ENCODE measurements at regions of chr1 and their contacts with region 1.

Region 1: GRCh38 chr1:25810341-25811299 is 9.1 kb upstream of the MTFR1L start:
- DNase-seq: peak; percentile 96
- ATAC-seq: peak; percentile 81
- H3K4me3 Mint-ChIP-seq: no peak overlapping the region
- H3K27ac Mint-ChIP-seq: no peak overlapping the region
- H3K4me1 Mint-ChIP-seq: 0 out of 2 replicates have a peak, but pooled peaks cover 3% of the 10 kb centered on the region
- H3K27me3 Mint-ChIP-seq: no peaks in the 10 kb centered on the region
- CTCF ChIP-seq: peak; percentile 90

Region 2: GRCh38 chr1:25503551-25504426 is 306.8 kb before region 1 on chr1:
- CTCF ChIA-PET with region 1: interaction called, 17 read pairs
- POLR2A ChIA-PET with region 1: no interaction called
- DNase-seq: peak; percentile 83
- ATAC-seq: peak; percentile 87
- H3K4me3 Mint-ChIP-seq: no peak overlapping the region
- H3K27ac Mint-ChIP-seq: peak overlapping the region; percentile 81
- H3K4me1 Mint-ChIP-seq: peaks cover 46% of the 10 kb centered on the region
- H3K27me3 Mint-ChIP-seq: no peaks in the 10 kb centered on the region
- CTCF ChIP-seq: peak; percentile 21; the same call in 1 of the 2 replicates

Region 3: DNA sequence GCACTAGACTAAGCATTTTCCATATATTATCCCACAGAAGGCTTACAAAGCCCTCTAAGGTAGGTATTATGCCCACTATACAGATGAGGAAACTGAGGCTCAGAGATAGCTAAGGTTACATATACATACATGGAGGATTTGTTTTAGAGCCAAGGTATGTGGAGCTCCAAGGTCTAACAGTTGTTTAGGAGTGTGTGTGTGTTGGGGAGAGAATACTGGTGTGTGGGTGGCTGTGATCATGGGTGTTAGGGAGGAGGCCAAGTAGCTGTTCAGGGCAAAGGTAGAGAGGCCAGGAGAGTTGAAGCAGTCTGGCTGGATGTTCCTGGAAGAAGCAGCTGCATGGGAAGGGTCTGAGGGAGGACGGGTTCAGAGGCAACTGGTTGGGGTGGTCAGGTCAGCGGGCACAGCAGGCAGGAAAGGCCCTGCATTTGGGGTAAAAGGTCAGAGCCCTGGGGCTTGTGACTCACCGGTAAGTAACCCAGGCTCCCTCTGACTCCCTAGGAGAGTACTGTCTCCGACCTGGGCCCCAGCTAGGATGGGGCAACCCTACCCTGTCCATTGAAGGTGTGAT is 272.3 kb before region 1 on chr1:
- CTCF ChIA-PET with region 1: interaction called, 12 read pairs
- POLR2A ChIA-PET with region 1: no interaction called
- DNase-seq: no peak
- ATAC-seq: no peak
- H3K4me3 Mint-ChIP-seq: no peak overlapping the region
- H3K27ac Mint-ChIP-seq: no peak overlapping the region
- H3K4me1 Mint-ChIP-seq: peaks cover 12% of the 10 kb centered on the region
- H3K27me3 Mint-ChIP-seq: peaks cover 6% of the 10 kb centered on the region; the same call in 1 of the 2 replicates
- CTCF ChIP-seq: no peak

Region 4: DNA sequence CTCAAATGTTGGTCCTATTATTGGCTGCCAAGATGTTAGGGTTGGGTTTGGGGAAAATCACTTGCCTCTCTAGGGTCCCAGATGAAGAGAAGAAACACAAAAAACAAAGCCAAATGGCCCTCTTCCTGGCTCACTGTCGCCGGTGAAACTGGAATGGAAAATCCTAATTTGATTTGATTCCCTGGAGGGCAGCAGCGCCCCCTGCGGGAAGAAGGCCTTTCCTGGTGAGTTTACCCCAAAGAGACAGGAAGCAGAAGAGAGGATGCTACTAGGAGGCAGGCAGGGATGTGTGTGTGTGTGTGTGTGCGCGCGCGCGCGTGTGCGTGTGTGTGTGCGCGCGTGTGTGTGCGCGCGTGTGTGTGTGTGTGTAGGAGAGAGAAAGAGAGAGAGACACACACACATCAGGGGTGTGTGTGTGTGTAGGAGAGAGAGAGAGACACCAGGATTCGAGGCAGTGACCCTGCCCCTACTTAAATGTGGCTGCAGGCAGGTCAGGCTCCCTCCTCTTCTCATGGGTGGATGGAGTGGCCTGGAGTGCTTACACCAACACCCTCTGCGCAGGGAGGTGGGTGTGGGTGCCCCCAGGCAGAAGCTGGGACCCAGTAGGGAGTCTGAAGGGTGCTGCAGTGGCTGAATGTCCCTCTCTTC is 13.7 kb before region 1 on chr1:
- CTCF ChIA-PET with region 1: interaction called, 80 read pairs
- POLR2A ChIA-PET with region 1: no interaction called
- DNase-seq: peak; percentile 95
- ATAC-seq: peak; percentile 27
- H3K4me3 Mint-ChIP-seq: no peak overlapping the region; the same call in 1 of the 2 replicates
- H3K27ac Mint-ChIP-seq: peak overlapping the region; percentile 29; the same call in 1 of the 2 replicates
- H3K4me1 Mint-ChIP-seq: peaks cover 30% of the 10 kb centered on the region
- H3K27me3 Mint-ChIP-seq: peaks cover 4% of the 10 kb centered on the region
- CTCF ChIP-seq: peak; percentile 77

Region 5: DNA sequence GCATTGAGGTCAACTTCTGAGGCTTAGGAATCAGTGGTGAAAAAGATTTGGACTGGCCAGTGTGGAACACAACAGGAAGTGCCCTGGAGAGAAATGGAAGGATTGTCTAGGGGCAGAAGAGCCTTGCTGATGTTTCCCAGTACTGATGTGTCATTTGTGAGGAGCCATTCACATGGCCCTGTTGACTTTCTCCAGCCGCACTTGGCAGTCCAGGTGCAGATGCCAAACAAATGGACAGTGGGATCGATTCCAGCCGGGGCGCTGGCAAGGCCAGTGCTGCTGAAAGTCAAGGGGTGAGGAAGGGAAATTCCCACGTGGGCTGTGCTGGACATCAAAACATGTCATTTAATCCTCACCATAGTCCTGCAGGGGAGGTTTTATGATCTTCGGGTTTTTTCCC is 261.7 kb after region 1 on chr1:
- CTCF ChIA-PET with region 1: no interaction called
- POLR2A ChIA-PET with region 1: no interaction called
- DNase-seq: no peak
- ATAC-seq: no peak
- H3K4me3 Mint-ChIP-seq: no peak overlapping the region
- H3K27ac Mint-ChIP-seq: no peak overlapping the region
- H3K4me1 Mint-ChIP-seq: no peaks in the 10 kb centered on the region; the same call in 1 of the 2 replicates
- H3K27me3 Mint-ChIP-seq: no peaks in the 10 kb centered on the region
- CTCF ChIP-seq: no peak

Measured in WTC11 (cell line).